Gastrocnemius medialis (tissue), 4 donors: ENCODE measurements at regions of chr1 and their contacts with region 1.

Region 1: DNA sequence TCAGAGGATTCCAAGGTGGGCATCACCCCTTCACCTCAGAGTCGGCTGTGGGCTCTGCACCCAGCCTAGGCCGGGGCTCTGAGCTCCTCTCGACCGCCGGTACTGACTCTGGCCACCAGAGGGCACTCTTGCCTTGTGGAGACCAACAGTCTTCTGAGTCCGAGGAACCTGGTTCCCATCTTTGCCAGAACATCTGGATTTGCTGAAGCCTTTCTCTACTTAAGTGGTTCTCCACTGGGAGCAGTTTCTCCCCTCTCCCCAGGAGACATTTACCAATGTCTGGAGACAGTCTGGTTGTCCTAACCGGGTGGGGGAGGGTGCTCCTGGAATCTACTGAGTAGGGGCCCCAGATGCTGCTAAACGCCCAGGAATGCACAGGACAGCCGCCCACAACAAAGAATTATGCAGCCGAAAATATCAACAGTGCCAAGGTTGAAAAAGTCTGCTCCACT is 9.4 kb downstream of the ETV3L start:
- DNase-seq: peak; percentile 63 to 69
- ATAC-seq: peak; percentile 75 to 83
- H3K4me3 ChIP-seq: no peak overlapping the region
- H3K27ac ChIP-seq: no peak overlapping the region
- H3K4me1 ChIP-seq: no peaks in the 10 kb centered on the region
- H3K27me3 ChIP-seq: no peaks in the 10 kb centered on the region
- CTCF ChIP-seq: peak; percentile 77 to 96 (median 91)
- POLR2A ChIP-seq: no peak

Region 2: GRCh38 chr1:157045251-157046218 is 44.7 kb before region 1 on chr1 and contains the start of gene ARHGEF11:
- in situ Hi-C with region 1: no loop called
- intact Hi-C with region 1: no loop called
- DNase-seq: peak; percentile 85 to 91
- ATAC-seq: peak; percentile 93 to 94
- H3K4me3 ChIP-seq: peak within 1 kb of the TSS; percentile 62 to 68 (median 66)
- H3K27ac ChIP-seq: peak within 1 kb of the TSS; percentile 84 to 89 (median 88)
- H3K4me1 ChIP-seq: peaks cover 38 to 40% of the 10 kb centered on the region in 2 donors
- H3K27me3 ChIP-seq: no peaks in the 10 kb centered on the region
- CTCF ChIP-seq: no peak
- POLR2A ChIP-seq: peak; percentile 80 to 83
- total RNA-seq, gene ARHGEF11: 19.5 to 33.4 (median 27.7) TPM

Region 3: DNA sequence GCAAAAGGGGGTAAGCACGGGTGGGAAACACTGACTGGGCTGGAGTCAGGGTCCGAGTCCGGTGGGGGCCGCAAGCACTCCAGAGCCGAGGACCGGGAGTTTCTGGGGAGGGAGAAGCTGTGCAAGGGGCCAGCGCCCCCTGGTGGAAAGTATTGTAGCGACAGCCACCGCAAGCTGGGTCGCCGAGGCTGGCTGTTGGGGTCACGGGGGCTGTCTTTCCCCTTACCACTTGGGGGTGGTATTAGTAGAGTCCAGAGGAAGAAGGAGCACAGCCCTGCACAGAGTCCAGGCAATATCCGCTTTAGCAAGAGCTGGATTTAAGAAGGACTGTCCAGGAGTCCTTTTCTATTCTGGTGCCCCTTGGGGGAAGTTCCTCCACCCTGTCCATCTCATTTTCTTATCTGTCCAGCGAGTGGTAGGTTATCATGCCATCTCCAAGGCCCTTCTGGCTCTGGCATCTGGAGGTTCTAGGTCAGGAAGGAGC is 65.9 kb after region 1 on chr1:
- in situ Hi-C with region 1: loop called (anchors 5 kb)
- intact Hi-C with region 1: loop called (anchors 1 kb)
- DNase-seq: peak; percentile 24 to 47
- ATAC-seq: peak; percentile 56 to 74
- H3K4me3 ChIP-seq: peak overlapping the region in 3 of 4 donors; percentile 28 to 46 (median 29)
- H3K27ac ChIP-seq: peak overlapping the region in 1 of 4 donors; percentile 9
- H3K4me1 ChIP-seq: peaks cover 0 to 4% of the 10 kb centered on the region in 2 donors
- H3K27me3 ChIP-seq: no peaks in the 10 kb centered on the region
- CTCF ChIP-seq: peak; percentile 91 to 98 (median 96)
- POLR2A ChIP-seq: no peak

Region 4: GRCh38 chr1:157163273-157164127 is 73.3 kb after region 1 on chr1:
- in situ Hi-C with region 1: loop called in 2 of 4 experiments (anchors 5 kb)
- intact Hi-C with region 1: no loop called
- DNase-seq: peak in 1 of 2 donors; percentile 41
- ATAC-seq: peak; percentile 36 to 75
- H3K4me3 ChIP-seq: peak overlapping the region in 1 of 4 donors; percentile 28
- H3K27ac ChIP-seq: no peak overlapping the region
- H3K4me1 ChIP-seq: no peaks in the 10 kb centered on the region
- H3K27me3 ChIP-seq: no peaks in the 10 kb centered on the region
- CTCF ChIP-seq: peak; percentile 40 to 90 (median 62)
- POLR2A ChIP-seq: no peak

Region 5: DNA sequence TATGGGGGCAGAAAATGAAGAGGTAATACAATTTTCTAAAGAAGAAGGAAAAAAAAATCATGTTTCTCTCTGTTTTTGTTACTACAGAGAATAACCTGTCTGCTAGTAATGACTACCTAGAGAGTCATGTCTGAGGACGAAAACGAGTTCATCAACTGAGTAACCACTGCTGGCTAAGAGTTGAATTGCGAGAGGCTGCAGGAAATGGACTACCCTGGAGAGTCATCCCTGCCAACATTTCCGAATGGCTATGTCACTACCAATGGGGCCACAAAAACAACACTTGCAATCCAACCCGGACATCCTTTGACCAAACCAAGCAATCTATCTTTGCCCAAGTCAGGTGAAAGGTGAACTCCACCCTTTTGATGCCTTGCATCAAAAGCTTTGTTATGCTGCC is 341.5 kb after region 1 on chr1:
- in situ Hi-C with region 1: no loop called
- intact Hi-C with region 1: no loop called
- DNase-seq: no peak
- ATAC-seq: no peak
- H3K4me3 ChIP-seq: no peak overlapping the region
- H3K27ac ChIP-seq: no peak overlapping the region
- H3K4me1 ChIP-seq: no peaks in the 10 kb centered on the region
- H3K27me3 ChIP-seq: no peaks in the 10 kb centered on the region
- CTCF ChIP-seq: no peak
- POLR2A ChIP-seq: no peak

Region 6: DNA sequence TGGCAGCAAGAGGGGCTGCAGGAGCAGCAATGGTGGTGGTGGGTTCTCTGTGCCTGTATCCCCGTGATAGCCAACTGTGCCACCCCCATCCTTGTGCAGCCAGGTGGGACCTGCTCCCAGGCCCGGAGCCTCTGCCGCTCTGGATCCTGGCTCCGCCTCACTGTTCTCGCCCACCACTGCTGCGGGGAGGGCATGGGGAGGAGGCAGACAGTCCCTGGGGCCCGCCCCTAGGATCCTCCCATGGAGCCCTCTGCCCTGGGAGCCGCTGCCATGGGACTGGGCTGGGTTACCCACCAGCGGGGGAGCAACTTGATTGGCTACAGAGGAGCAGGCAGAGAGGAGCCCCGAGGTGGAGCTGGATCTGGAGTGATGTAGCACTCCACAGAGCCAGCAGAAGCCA is 1122.1 kb after region 1 on chr1:
- in situ Hi-C with region 1: no loop called
- intact Hi-C with region 1: no loop called
- DNase-seq: no peak
- ATAC-seq: no peak
- H3K4me3 ChIP-seq: no peak overlapping the region
- H3K27ac ChIP-seq: no peak overlapping the region
- H3K4me1 ChIP-seq: no peaks in the 10 kb centered on the region
- H3K27me3 ChIP-seq: no peaks in the 10 kb centered on the region
- CTCF ChIP-seq: no peak
- POLR2A ChIP-seq: no peak